ENCODE measurements at regions of chr3 and their contacts with region 1.

Region 1: DNA sequence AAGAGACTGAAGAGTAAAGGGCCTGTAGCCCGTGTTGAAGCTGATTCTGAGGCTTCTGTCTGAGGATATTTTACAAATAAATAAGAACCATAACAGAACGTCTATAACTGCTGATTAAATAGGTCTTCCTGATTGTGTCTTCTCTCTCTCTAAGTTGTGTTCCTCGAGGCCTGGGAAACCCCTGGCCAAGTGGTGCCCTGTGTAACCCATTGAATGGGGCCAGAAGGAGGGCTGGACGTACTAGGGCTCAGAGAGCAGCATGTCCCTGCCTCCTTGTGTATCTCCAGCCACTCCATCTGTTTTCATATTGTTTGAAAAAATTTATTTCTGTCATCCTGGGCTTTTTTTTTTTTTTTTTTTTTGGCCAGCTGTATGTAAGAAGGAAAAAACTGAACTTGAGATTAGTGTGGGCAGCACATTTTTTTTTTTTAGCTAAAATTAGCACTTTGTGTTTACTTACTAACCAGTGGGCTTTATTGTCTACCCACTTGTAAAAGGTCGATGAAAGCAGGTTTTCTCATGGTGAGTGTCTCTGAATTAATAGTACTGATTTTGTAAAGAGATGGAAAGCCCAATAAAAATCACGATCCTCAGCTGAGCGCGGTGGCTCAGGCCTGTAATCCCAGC is 10.7 kb downstream of the DHX30 start:
- DNase-seq: no peak
- H3K4me3 ChIP-seq: no peak overlapping the region
- H3K27ac ChIP-seq: no peak overlapping the region
- H3K4me1 ChIP-seq: no peaks in the 10 kb centered on the region
- H3K27me3 ChIP-seq: no peaks in the 10 kb centered on the region
- CTCF ChIP-seq: no peak

Region 2: DNA sequence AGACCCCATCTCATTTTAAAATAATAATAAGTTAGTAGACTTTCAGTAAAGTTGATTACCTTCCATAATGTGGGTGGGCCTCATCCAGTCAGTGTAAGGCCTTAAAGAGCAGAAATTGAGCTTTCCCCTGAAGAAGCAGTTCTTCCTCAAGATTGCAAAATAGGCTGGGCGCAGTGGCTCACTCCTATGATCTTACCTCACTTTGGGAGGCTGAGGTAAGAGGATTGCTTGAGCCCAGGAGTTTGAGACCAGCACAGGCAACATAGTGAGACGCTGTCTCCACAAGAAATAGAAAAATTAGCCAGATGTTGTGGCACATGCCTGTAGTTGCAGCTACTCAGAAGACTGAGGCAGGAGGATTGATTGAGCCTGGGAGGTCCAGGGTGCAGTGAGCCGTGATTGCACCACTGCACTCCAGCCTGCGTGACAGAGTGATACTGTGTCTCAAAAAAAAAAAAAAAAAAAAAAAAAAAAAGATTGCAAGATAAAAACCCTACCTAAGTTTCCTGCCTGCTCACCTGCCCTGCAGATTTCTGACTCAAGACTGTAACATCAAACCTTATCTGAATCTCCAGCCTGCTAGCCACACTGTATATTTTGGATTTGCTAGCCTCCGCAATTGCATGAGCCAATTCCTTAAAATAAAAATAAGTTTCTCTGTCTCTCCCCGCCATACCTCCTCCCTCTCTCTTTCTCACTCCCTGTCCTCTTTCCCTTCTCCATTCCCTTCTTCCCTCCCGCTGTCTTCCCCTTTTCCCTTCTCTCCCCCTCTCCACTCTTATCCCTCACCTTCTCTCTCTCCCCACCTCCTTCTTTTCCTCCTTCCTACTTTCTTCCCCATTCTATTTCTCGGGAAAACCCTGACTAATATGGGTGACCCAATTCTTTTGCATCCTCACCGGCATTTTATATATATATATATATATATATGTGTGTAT is 514.0 kb before region 1 on chr3:
- CTCF ChIA-PET with region 1: interaction called, 12 read pairs
- POLR2A ChIA-PET with region 1: no interaction called
- intact Hi-C with region 1: no loop called
- DNase-seq: no peak
- H3K4me3 ChIP-seq: no peak overlapping the region
- H3K27ac ChIP-seq: no peak overlapping the region
- H3K4me1 ChIP-seq: no peaks in the 10 kb centered on the region
- H3K27me3 ChIP-seq: no peaks in the 10 kb centered on the region
- CTCF ChIP-seq: no peak

Region 3: DNA sequence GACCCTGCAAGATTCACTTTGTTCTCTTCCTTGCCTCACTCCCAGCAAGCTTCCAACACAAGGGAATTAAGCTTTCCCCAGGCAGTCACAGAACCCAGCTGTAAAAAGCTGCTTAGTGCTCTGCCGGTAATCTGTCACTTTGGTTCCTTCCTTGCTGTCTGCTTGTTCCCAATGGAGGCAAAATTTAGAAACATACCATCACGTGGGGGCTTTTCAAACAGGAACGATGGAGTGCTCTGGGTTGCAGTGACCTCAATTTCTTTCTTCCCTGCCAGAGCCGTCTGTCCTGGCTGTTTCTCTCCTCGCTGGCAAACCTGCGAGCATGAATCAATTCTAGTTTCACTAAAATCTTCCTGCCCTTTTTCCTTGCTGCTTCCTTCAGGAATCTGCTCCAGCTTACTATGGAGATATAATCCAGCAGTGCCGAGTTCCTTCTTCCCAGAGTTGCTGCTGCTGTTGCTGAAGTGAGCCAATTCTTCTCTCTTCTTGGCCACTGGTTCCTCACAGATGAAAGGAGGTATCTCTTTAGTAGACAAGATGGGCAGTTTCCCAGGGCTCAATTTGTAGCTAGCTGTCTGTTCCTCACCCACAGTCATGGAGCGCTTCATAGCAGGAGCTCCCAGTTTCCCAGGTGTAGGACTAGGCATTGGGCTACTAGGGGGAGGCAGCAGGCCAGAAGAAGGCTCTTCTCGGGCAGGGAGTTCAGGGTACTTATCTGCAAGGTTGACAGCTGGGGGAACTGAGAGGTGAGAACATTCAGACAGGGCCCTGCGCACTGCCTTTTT is 77.4 kb after region 1 on chr3:
- CTCF ChIA-PET with region 1: no interaction called
- POLR2A ChIA-PET with region 1: no interaction called
- intact Hi-C with region 1: no loop called
- DNase-seq: no peak
- H3K4me3 ChIP-seq: no peak overlapping the region
- H3K27ac ChIP-seq: no peak overlapping the region
- H3K4me1 ChIP-seq: no peaks in the 10 kb centered on the region
- H3K27me3 ChIP-seq: no peaks in the 10 kb centered on the region
- CTCF ChIP-seq: no peak

Region 4: DNA sequence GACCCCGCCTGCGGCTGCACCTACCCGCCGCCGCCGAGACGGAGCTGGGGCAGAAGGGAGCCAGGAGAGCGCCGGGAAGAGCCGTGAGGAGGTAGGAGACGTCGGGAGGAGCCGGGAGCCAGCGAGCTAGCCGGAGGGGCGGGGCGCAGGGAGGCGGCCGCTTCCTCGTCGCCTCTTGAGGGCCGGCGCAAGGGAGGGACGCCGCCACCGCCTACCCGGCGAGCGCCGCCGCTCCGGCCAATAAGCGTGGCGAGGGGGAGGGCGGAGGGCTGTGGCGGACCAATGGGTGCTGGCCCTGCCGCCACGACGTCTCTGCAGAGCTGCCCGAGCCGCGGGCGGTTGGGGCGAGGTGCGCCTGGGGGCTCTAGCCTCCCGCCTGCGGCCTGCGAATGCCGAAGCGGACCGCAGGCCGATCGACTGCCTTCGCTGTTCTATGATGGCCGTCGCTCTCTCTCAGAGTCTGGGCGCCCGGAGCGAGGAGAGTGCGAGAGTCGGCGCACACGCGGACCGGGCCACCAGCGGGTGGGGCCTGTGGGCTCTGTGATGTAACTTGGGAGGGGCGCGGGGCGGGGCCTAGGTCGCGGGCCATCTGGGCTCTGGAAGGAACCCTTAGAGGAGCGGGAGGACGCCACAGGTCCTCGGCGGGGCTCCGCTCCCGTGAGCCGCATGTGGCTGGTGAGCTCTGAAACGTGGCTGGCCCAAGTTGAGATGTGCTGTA is 275.2 kb after region 1 on chr3:
- CTCF ChIA-PET with region 1: no interaction called
- POLR2A ChIA-PET with region 1: no interaction called
- intact Hi-C with region 1: no loop called
- DNase-seq: peak; percentile 88 to 97
- H3K4me3 ChIP-seq: peak overlapping the region; percentile 73
- H3K27ac ChIP-seq: peak overlapping the region; percentile 90
- H3K4me1 ChIP-seq: peaks cover 24% of the 10 kb centered on the region
- H3K27me3 ChIP-seq: no peaks in the 10 kb centered on the region
- CTCF ChIP-seq: 0 out of 2 replicates have a peak, but pooled peaks have one; percentile 3

Measured in PC-9 (cell line).